IMR-90 (cell line): ENCODE measurements at regions of chr6 and their contacts with region 1.

Region 1: DNA sequence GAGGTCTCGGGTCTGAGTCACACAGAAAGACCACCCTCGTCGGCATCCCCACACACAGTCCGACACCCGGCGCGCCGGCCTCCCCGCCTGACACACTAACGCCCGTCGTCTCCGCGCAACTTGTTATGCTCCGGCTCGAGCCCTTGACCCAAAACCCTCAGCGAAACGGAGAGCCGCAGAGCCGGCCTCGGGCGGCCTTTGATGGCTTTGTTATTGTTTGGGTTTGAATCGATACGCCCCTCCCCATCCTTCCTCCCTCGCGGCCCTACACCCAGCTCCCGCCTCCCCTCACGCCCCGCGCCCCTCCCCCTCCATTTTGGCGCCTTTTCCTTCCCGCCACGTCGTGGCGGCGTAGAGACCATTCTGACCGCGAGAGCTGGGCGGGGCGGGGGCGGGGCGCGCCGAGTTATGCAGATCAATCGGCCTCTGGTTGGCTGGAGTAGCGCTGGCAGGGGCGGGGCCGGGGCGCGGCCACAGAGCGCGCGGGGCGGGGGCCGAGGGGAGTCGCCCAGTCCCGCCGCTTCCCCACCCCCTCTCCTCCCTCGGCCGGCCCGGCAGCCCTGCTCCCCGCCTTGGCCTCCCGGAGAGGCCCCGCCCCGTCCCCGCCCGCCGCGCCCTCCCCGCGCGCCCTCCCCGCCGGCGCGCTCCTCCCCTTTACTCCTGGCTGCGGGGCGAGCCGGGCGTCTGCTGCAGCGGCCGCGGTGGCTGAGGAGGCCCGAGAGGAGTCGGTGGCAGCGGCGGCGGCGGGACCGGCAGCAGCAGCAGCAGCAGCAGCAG is at the start of gene PIM1:
- DNase-seq: peak; percentile 95
- ATAC-seq: peak; percentile 91
- H3K4me3 ChIP-seq: peak within 1 kb of the TSS; percentile 84
- H3K27ac ChIP-seq: peak within 1 kb of the TSS; percentile 85
- H3K4me1 ChIP-seq: peaks cover 7% of the 10 kb centered on the region
- H3K27me3 ChIP-seq: no peaks in the 10 kb centered on the region
- CTCF ChIP-seq: no peak
- POLR2A ChIP-seq: peak; percentile 79
- RAD21 ChIP-seq: no peak; the same call in 1 of the 2 replicates
- total RNA-seq, gene PIM1: 6.1 and 7.2 TPM in 2 replicates

Region 2: DNA sequence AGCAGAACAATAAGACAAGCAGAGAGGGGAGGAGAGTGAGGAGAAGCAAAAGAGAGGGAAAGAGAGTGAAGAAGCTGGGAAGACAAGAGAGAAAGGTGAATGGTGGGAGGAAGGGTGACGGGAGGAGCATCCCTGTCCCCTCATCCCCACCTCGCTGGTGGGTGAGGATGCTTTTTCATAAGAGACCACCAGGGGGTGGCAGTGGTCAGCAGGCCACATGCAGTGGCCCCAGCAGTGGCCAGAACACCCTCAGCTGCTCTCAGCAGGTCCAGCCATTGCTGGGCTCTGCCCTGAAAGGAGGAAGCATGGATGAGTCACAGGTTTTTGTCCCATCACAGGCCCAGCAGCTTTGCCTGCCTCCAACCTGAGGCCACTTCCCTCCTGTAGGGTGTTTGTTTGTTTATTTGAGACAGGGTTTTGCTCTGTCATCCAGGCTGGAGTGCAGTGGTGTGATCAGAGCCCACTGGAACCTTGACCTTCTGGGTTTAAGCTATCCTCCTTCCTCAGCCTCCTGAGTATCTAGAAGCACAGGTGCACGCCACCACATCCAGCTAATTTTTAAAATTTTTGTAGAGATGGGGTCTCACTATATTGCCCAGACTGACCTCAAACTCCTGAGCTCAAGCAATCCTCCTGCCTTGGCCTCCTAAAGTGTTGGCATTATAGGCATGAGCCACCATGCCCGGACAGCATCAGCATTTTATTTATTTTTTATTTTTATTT is 140.3 kb before region 1 on chr6:
- CTCF ChIA-PET with region 1: interaction called, 6 read pairs
- POLR2A ChIA-PET with region 1: no interaction called
- dilution Hi-C with region 1: no loop called
- in situ Hi-C with region 1: no loop called
- intact Hi-C with region 1: loop called (anchors 1 kb)
- DNase-seq: peak; percentile 88
- ATAC-seq: peak; percentile 99
- H3K4me3 ChIP-seq: no peak overlapping the region
- H3K27ac ChIP-seq: no peak overlapping the region
- H3K4me1 ChIP-seq: no peaks in the 10 kb centered on the region
- H3K27me3 ChIP-seq: no peaks in the 10 kb centered on the region; the same call in 1 of the 2 replicates
- CTCF ChIP-seq: peak; percentile 83
- POLR2A ChIP-seq: no peak
- RAD21 ChIP-seq: peak; percentile 88

Region 3: GRCh38 chr6:37059344-37060206 is 110.1 kb before region 1 on chr6:
- CTCF ChIA-PET with region 1: interaction called, 6 read pairs
- POLR2A ChIA-PET with region 1: no interaction called
- dilution Hi-C with region 1: no loop called
- in situ Hi-C with region 1: loop called (anchors 5 kb)
- intact Hi-C with region 1: loop called (anchors 1 kb)
- DNase-seq: peak; percentile 97
- ATAC-seq: peak; percentile 88
- H3K4me3 ChIP-seq: peak overlapping the region; percentile 1; the same call in 1 of the 2 replicates
- H3K27ac ChIP-seq: peak overlapping the region; percentile 81
- H3K4me1 ChIP-seq: peaks cover 12% of the 10 kb centered on the region
- H3K27me3 ChIP-seq: no peaks in the 10 kb centered on the region
- CTCF ChIP-seq: peak; percentile 86
- POLR2A ChIP-seq: peak; percentile 63; the same call in 1 of the 2 replicates
- RAD21 ChIP-seq: peak; percentile 87

Region 4: GRCh38 chr6:37102279-37103168 is 67.2 kb before region 1 on chr6:
- CTCF ChIA-PET with region 1: interaction called, 4 read pairs
- POLR2A ChIA-PET with region 1: no interaction called
- dilution Hi-C with region 1: no loop called
- in situ Hi-C with region 1: no loop called
- intact Hi-C with region 1: loop called (anchors 1 kb)
- DNase-seq: peak; percentile 88
- ATAC-seq: peak; percentile 94
- H3K4me3 ChIP-seq: peak overlapping the region; percentile 39
- H3K27ac ChIP-seq: peak overlapping the region; percentile 37
- H3K4me1 ChIP-seq: peaks cover 12% of the 10 kb centered on the region
- H3K27me3 ChIP-seq: no peaks in the 10 kb centered on the region
- CTCF ChIP-seq: 0 out of 2 replicates have a peak, but pooled peaks have one; percentile 18
- POLR2A ChIP-seq: peak; percentile 62; the same call in 1 of the 2 replicates
- RAD21 ChIP-seq: 0 out of 2 replicates have a peak, but pooled peaks have one; percentile 5

Region 5: GRCh38 chr6:37137201-37138090 is 32.2 kb before region 1 on chr6:
- CTCF ChIA-PET with region 1: interaction called, 5 read pairs
- POLR2A ChIA-PET with region 1: interaction called, 7 read pairs
- dilution Hi-C with region 1: no loop called
- in situ Hi-C with region 1: no loop called
- intact Hi-C with region 1: loop called (anchors 1 kb)
- DNase-seq: peak; percentile 99
- ATAC-seq: peak; percentile 79
- H3K4me3 ChIP-seq: peak overlapping the region; percentile 4; the same call in 1 of the 2 replicates
- H3K27ac ChIP-seq: peak overlapping the region; percentile 85
- H3K4me1 ChIP-seq: peaks cover 47% of the 10 kb centered on the region
- H3K27me3 ChIP-seq: no peaks in the 10 kb centered on the region
- CTCF ChIP-seq: 0 out of 2 replicates have a peak, but pooled peaks have one; percentile 1
- POLR2A ChIP-seq: peak; percentile 24; the same call in 1 of the 2 replicates
- RAD21 ChIP-seq: peak; percentile 39

Region 6: DNA sequence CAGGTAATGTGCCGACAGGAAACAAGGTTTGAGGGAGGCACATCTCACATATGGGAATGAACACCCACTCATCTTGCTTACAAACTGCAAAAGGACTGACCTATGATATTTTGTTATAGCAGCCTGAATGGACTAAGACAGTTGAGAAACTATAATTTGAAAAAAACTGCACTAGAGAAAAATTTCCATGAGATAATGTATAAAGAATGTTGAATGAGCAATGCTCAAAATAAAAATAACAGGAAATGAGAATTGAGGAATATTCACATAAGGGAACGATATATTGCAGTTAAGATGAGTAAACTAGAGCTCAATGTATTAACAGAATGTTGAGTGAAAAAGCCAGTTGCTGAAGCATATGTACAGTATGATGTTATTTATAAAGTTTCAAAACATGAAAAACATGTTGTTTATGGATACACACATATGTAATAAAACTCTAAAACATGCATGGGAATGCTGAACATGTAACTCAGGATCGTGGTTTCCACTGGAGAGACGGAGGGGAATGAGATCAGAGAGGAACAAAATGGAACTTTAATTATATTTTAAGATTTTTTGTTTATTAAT is 81.6 kb after region 1 on chr6:
- CTCF ChIA-PET with region 1: no interaction called
- POLR2A ChIA-PET with region 1: no interaction called
- dilution Hi-C with region 1: no loop called
- in situ Hi-C with region 1: no loop called
- intact Hi-C with region 1: no loop called
- DNase-seq: peak; percentile 66
- ATAC-seq: no peak; the same call in 1 of the 2 replicates
- H3K4me3 ChIP-seq: no peak overlapping the region
- H3K27ac ChIP-seq: no peak overlapping the region; the same call in 1 of the 2 replicates
- H3K4me1 ChIP-seq: peaks cover 6% of the 10 kb centered on the region
- H3K27me3 ChIP-seq: no peaks in the 10 kb centered on the region
- CTCF ChIP-seq: no peak
- POLR2A ChIP-seq: no peak
- RAD21 ChIP-seq: no peak